GM12878 (cell line): ENCODE measurements at regions of chr7 and their contacts with region 1.

Region 1: GRCh38 chr7:142535123-142535779 is 214.0 kb upstream of the PRSS1 start:
- DNase-seq: peak; percentile 20
- ATAC-seq: peak; percentile 99
- H3K4me3 ChIP-seq: no peak overlapping the region
- H3K27ac ChIP-seq: no peak overlapping the region
- H3K4me1 ChIP-seq: no peaks in the 10 kb centered on the region
- H3K27me3 ChIP-seq: no peaks in the 10 kb centered on the region
- CTCF ChIP-seq: peak; percentile 74 to 84 (median 84)
- EP300 ChIP-seq: no peak
- POLR2A ChIP-seq: no peak
- RAD21 ChIP-seq: peak; percentile 73

Region 2: GRCh38 chr7:142272841-142273240 is 262.4 kb before region 1 on chr7:
- CTCF ChIA-PET with region 1: no interaction called
- POLR2A ChIA-PET with region 1: no interaction called
- RAD21 ChIA-PET with region 1: no interaction called
- SMC1A ChIA-PET with region 1: no interaction called
- in situ Hi-C with region 1: no loop called
- intact Hi-C with region 1: no loop called
- DNase-seq: no peak
- ATAC-seq: no peak
- H3K4me3 ChIP-seq: no peak overlapping the region
- H3K27ac ChIP-seq: no peak overlapping the region
- H3K4me1 ChIP-seq: no peaks in the 10 kb centered on the region
- H3K27me3 ChIP-seq: peaks cover 0 to 2% of the 10 kb centered on the region in 2 experiments; a peak in 1 of 4 replicates
- CTCF ChIP-seq: no peak
- EP300 ChIP-seq: no peak
- POLR2A ChIP-seq: no peak
- RAD21 ChIP-seq: no peak

Region 3: DNA sequence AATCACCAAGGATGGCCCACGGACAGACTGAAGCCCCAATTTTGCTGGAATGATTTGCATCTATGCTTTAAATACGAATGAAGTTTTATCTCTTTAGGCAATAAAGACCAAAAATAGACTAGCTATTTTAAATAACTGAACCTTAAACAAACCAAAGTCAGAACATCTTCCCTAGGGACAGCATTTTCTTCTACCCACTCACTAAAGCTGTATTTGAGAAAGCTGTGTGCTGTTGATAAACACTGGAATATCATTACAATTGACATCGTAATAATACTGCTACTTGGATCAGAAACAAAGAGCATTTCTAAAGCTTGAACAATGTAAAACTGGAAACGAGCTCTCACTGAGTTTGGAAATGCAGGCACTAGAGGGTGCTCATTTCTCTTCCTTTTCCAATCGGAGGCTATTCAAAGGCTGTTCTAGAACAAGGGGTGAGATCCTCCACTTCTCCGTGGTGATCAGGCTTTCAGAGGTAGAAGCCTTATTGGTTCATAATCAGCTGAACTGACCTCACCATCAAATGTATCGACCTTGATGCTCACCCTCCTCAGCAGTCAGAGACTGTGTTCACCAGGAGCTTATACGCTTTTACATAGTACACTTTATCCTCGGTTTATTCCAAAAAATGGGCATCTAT is 11.3 kb before region 1 on chr7:
- CTCF ChIA-PET with region 1: interaction called, 41 read pairs
- POLR2A ChIA-PET with region 1: no interaction called
- RAD21 ChIA-PET with region 1: interaction called, 6 read pairs
- SMC1A ChIA-PET with region 1: interaction called, 13 read pairs
- in situ Hi-C with region 1: no loop called
- intact Hi-C with region 1: no loop called
- DNase-seq: no peak
- ATAC-seq: no peak
- H3K4me3 ChIP-seq: no peak overlapping the region
- H3K27ac ChIP-seq: no peak overlapping the region
- H3K4me1 ChIP-seq: no peaks in the 10 kb centered on the region
- H3K27me3 ChIP-seq: no peaks in the 10 kb centered on the region; a peak in 3 of 4 replicates
- CTCF ChIP-seq: no peak
- EP300 ChIP-seq: no peak
- POLR2A ChIP-seq: no peak
- RAD21 ChIP-seq: no peak

Region 4: GRCh38 chr7:142557971-142558582 is 22.8 kb after region 1 on chr7:
- CTCF ChIA-PET with region 1: interaction called, 38 read pairs
- POLR2A ChIA-PET with region 1: no interaction called
- RAD21 ChIA-PET with region 1: interaction called, 7 read pairs
- SMC1A ChIA-PET with region 1: interaction called, 7 read pairs
- in situ Hi-C with region 1: no loop called
- intact Hi-C with region 1: no loop called
- DNase-seq: no peak
- ATAC-seq: peak; percentile 97
- H3K4me3 ChIP-seq: no peak overlapping the region
- H3K27ac ChIP-seq: no peak overlapping the region
- H3K4me1 ChIP-seq: no peaks in the 10 kb centered on the region
- H3K27me3 ChIP-seq: peaks cover 0 to 3% of the 10 kb centered on the region in 2 experiments; a peak in 2 of 4 replicates
- CTCF ChIP-seq: peak; percentile 88 to 95 (median 88)
- EP300 ChIP-seq: no peak
- POLR2A ChIP-seq: no peak
- RAD21 ChIP-seq: peak; percentile 78

Region 5: DNA sequence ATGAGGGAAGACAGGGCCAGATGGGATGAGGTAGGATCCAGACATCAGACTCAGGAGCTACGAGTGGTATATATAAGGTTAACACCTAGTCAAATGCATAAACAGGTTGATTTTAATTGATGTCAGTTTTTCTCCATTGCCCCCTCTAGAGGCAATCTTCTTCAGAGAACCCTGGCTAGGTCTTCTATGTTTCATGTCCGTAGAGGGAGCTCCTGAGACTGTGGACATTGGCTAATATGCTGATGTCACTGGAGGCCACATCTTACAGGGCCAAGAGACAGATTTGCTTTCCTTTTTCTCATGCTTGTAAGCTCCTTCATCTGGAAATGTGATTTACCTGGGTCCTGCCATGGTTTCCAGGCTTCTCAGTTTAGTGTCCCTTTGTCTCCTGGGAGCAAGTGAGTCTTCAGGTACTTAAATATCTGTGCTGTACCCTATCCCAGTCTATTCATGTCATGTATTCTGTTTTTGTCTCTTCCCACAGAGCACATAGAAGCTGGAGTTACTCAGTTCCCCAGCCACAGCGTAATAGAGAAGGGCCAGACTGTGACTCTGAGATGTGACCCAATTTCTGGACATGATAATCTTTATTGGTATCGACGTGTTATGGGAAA is 52.4 kb after region 1 on chr7:
- CTCF ChIA-PET with region 1: interaction called, 62 read pairs
- POLR2A ChIA-PET with region 1: interaction called, 3 read pairs
- RAD21 ChIA-PET with region 1: interaction called, 48 read pairs
- SMC1A ChIA-PET with region 1: interaction called, 46 read pairs
- in situ Hi-C with region 1: no loop called
- intact Hi-C with region 1: loop called (anchors 1 kb)
- DNase-seq: peak; percentile 15
- ATAC-seq: peak; percentile 88
- H3K4me3 ChIP-seq: no peak overlapping the region
- H3K27ac ChIP-seq: no peak overlapping the region
- H3K4me1 ChIP-seq: 0 out of 2 replicates have a peak, but pooled peaks cover 4% of the 10 kb centered on the region
- H3K27me3 ChIP-seq: no peaks in the 10 kb centered on the region
- CTCF ChIP-seq: peak; percentile 75 to 93 (median 75); a peak in 5 of 6 replicates
- EP300 ChIP-seq: no peak
- POLR2A ChIP-seq: no peak
- RAD21 ChIP-seq: peak; percentile 48

Region 6: DNA sequence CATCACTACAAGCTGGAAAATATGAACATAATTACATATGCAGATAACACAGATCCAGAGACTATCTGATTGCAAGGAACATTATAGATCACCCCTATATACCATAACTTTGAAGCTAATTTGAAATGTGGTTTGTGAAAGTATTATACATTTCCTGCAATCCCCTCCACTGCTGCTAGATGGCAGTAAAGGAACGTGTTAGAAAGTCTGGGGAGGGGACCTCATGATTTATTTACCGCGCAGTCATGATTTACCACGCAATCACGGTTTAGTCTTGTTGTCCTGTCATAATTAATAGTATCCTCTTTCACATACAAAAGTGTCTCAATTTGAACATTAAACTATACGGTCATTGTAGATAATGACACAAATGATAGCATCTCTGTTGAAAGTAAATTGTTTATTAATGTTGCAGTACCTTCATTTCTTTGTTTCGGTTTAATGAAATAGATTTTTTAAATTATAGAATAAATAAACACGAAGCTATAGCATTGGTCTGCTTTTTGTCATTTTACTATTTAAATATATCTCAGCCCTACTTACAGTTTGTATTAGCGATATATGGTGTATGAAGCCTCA is 68.7 kb after region 1 on chr7:
- CTCF ChIA-PET with region 1: interaction called, 19 read pairs
- POLR2A ChIA-PET with region 1: no interaction called
- RAD21 ChIA-PET with region 1: interaction called, 6 read pairs
- SMC1A ChIA-PET with region 1: interaction called, 13 read pairs
- in situ Hi-C with region 1: no loop called
- intact Hi-C with region 1: no loop called
- DNase-seq: no peak
- ATAC-seq: peak; percentile 74
- H3K4me3 ChIP-seq: no peak overlapping the region
- H3K27ac ChIP-seq: no peak overlapping the region
- H3K4me1 ChIP-seq: no peaks in the 10 kb centered on the region
- H3K27me3 ChIP-seq: no peaks in the 10 kb centered on the region
- CTCF ChIP-seq: peak; percentile 74 to 81 (median 81)
- EP300 ChIP-seq: no peak
- POLR2A ChIP-seq: no peak
- RAD21 ChIP-seq: peak; percentile 82

Region 7: DNA sequence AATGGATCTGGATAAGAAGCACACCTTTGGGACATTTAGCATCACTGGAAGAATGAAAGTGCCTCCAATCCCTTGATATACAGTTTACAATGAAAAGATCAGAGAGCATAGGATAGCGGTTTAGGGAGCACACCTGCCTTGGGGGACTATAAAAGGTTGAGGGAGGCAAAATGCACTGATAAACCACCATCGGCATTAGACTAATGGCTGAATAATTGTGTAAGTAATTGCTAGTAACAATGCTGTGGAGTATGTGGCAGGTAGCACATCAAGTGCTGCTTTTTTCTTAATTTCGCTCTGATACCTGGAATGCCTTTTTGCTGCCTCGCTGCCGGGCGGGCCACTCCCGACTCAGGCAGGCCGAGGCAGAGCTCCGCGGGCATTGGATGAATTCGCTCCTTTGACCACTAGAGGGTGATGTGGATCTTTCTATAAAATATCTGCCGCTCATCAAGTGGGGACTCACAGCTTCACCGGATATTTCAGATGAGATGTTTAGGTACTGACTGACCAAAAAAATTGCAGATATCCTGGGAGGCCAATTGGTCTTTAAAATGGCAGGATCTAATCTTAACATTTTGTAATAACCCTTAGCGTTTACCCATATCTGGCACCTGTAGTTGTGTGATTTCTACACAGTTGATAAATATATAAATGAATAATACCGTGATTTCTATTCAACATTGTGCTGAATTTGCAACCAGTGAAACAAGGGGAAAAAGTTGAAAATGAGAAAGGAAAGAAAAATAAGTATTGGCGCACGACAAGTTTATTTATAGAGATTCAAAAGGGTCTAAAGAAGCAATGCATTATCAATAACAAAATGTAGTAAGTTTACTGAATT is 97.3 kb after region 1 on chr7:
- CTCF ChIA-PET with region 1: interaction called, 26 read pairs
- POLR2A ChIA-PET with region 1: no interaction called
- RAD21 ChIA-PET with region 1: no interaction called
- SMC1A ChIA-PET with region 1: interaction called, 8 read pairs
- in situ Hi-C with region 1: no loop called
- intact Hi-C with region 1: no loop called
- DNase-seq: peak; percentile 32
- ATAC-seq: peak; percentile 100
- H3K4me3 ChIP-seq: no peak overlapping the region
- H3K27ac ChIP-seq: no peak overlapping the region
- H3K4me1 ChIP-seq: no peaks in the 10 kb centered on the region
- H3K27me3 ChIP-seq: peaks cover 0 to 1% of the 10 kb centered on the region in 2 experiments; a peak in 1 of 4 replicates
- CTCF ChIP-seq: peak; percentile 73 to 86 (median 82)
- EP300 ChIP-seq: no peak
- POLR2A ChIP-seq: no peak
- RAD21 ChIP-seq: peak; percentile 81